ENCODE measurements at regions of chr2 and their contacts with region 1.

Region 1: GRCh38 chr2:104412384-104412783 is 441.5 kb upstream of the POU3F3 start:
- DNase-seq: peak; percentile 62
- H3K4me3 Mint-ChIP-seq: no peak overlapping the region
- H3K27ac Mint-ChIP-seq: no peak overlapping the region
- H3K4me1 Mint-ChIP-seq: no peaks in the 10 kb centered on the region
- H3K27me3 Mint-ChIP-seq: peaks cover 87% of the 10 kb centered on the region
- CTCF ChIP-seq: peak; percentile 47

Region 2: GRCh38 chr2:104033399-104033798 is 379.0 kb before region 1 on chr2:
- CTCF ChIA-PET with region 1: no interaction called
- POLR2A ChIA-PET with region 1: no interaction called
- intact Hi-C with region 1: loop called (anchors 5 kb)
- DNase-seq: peak; percentile 30
- H3K4me3 Mint-ChIP-seq: no peak overlapping the region
- H3K27ac Mint-ChIP-seq: no peak overlapping the region
- H3K4me1 Mint-ChIP-seq: no peaks in the 10 kb centered on the region
- H3K27me3 Mint-ChIP-seq: peaks cover 86% of the 10 kb centered on the region
- CTCF ChIP-seq: peak; percentile 28

Region 3: GRCh38 chr2:105248316-105249070 is 836.1 kb after region 1 on chr2:
- CTCF ChIA-PET with region 1: no interaction called
- POLR2A ChIA-PET with region 1: no interaction called
- intact Hi-C with region 1: no loop called
- DNase-seq: no peak
- H3K4me3 Mint-ChIP-seq: no peak overlapping the region
- H3K27ac Mint-ChIP-seq: no peak overlapping the region
- H3K4me1 Mint-ChIP-seq: peaks cover 12% of the 10 kb centered on the region
- H3K27me3 Mint-ChIP-seq: peaks cover 15% of the 10 kb centered on the region
- CTCF ChIP-seq: no peak